ENCODE measurements at regions of chr3 and their contacts with region 1.

Region 1: GRCh38 chr3:193572426-193572908 is 17.8 kb upstream of the ATP13A4 start:
- DNase-seq: peak; percentile 67
- H3K4me3 ChIP-seq: no peak overlapping the region
- H3K27ac ChIP-seq: no peak overlapping the region
- H3K4me1 ChIP-seq: no peaks in the 10 kb centered on the region
- H3K27me3 ChIP-seq: no peaks in the 10 kb centered on the region
- CTCF ChIP-seq: peak in 3 of 4 experiments; percentile 62 to 67 (median 67)
- EP300 ChIP-seq: no peak
- POLR2A ChIP-seq: no peak

Region 2: DNA sequence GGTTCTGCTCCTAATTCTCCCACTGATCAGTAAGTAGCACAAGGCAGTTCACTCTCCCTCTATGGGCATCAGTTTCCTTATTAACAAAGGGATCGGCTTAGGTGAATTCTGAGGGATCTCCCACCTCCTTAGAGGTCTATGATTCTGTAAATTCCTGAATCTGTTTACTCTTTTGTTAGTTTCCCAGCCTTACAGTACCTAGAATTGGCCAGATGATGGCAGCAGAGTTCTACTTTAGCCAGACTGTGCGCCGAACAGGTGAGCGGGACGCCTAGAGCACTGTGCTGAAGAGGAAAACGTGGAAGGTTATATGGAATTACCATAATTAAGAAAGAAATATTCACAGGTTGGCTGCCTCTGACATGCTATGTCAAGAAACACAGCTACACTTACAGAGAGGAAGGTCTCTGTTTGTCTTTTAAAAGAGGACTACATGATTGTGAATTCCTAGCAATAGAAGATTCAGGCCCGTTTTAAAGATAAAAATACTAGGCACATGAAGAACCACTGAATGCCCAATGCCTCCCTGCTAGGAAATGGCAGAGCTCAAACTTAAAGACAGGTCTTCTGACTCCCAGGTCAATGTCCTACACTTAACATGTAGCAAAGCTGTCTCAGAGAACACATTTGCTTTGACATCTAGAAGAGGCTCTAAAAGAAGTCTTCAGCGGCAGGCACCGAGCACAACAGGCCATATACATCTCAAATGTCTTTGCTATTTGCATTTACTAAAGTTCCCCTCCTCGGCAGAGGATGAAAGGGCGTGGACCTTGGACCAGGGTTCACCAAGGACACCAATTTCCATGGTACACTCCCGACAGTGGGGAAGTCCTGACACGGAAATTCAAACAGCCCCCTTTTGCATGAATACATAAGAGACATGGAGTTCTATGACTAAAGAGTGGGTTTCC is 1105.0 kb before region 1 on chr3:
- intact Hi-C with region 1: loop called (anchors 10 kb)
- DNase-seq: no peak
- H3K4me3 ChIP-seq: no peak overlapping the region
- H3K27ac ChIP-seq: no peak overlapping the region
- H3K4me1 ChIP-seq: no peaks in the 10 kb centered on the region
- H3K27me3 ChIP-seq: peaks cover 0 to 15% (median 0%) of the 10 kb centered on the region in 3 donors
- CTCF ChIP-seq: peak; percentile 15 to 80 (median 65)
- EP300 ChIP-seq: no peak
- POLR2A ChIP-seq: no peak

Region 3: DNA sequence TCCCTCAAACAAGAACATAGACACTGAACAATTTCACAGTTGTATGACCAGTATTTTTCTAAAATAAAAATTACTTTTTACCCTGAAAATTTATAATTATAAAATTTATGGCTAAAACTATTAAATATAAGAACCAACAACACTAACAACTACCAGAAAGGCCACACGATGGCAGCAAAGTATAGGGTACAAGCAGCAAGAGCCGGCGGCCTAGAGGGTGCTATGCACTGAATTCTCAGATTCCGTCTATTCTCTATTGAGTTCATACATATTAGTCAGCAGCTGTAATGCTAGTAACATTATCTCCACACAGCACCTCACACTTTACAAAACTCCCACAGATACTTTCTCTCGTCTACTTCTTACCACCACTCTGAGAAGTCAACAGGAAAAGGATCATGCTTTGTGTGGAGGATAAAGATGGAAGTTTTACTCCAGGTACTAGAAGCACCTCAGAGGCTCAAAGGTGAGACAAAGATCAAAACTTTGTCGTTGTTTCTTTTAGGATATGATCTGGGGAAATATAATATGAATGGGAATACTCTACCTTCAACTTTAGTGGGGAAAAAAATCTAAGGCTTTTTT is 1005.7 kb before region 1 on chr3:
- intact Hi-C with region 1: loop called (anchors 5 kb)
- DNase-seq: peak; percentile 76
- H3K4me3 ChIP-seq: no peak overlapping the region
- H3K27ac ChIP-seq: no peak overlapping the region
- H3K4me1 ChIP-seq: peaks cover 0 to 7% (median 5%) of the 10 kb centered on the region in 4 donors
- H3K27me3 ChIP-seq: no peaks in the 10 kb centered on the region
- CTCF ChIP-seq: peak; percentile 43 to 70 (median 50)
- EP300 ChIP-seq: no peak
- POLR2A ChIP-seq: no peak

Region 4: DNA sequence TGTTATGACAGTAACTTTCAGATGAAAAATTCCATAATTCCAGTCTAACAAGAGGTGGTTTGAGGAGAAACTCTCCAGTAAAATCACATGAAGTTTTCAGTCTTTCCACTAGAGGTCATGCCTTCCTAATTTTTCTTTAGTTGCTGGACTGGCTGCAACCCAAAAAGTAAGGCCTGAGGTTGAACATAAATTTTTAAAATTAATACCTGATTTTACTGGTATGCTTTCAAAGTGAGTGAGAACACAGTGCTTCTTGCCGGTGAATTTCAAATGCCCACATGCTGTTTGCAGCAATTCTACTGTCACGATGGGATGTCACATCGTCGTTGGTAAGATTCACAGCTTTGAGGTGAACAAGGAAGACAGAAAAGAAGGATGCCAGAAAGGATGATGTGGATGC is 756.1 kb before region 1 on chr3:
- intact Hi-C with region 1: loop called (anchors 2 kb)
- DNase-seq: no peak
- H3K4me3 ChIP-seq: no peak overlapping the region
- H3K27ac ChIP-seq: no peak overlapping the region
- H3K4me1 ChIP-seq: peaks cover 0 to 26% (median 12%) of the 10 kb centered on the region in 4 donors
- H3K27me3 ChIP-seq: no peaks in the 10 kb centered on the region
- CTCF ChIP-seq: peak; percentile 23 to 77 (median 66)
- EP300 ChIP-seq: no peak
- POLR2A ChIP-seq: no peak